Right ventricle myocardium superior (tissue), 1 donor: ENCODE measurements at regions of chr7 and their contacts with region 1.

Region 1: GRCh38 chr7:82234457-82235049 is 209.0 kb downstream of the CACNA2D1 start:
- DNase-seq: no peak
- ATAC-seq: no peak

Region 2: DNA sequence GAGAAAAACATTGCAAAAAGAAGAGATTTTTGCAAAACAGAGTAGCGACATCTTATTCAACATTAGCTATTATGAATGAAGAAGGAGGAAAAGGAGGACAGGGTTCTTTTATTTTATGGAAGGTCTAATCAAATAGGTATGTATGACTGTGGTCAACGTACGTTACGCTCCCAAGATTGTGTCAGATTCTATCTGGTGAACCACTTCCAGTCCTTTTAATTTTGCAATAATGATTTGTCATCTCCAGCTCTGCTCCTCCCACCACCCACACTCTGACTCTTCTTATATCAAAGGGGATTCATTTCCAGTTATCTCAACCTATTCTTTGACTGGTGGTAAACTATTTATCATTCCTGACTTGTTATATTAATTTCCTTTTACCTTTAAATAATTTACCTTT is 50.9 kb before region 1 on chr7:
- intact Hi-C with region 1: no loop called
- DNase-seq: no peak
- ATAC-seq: no peak

Region 3: GRCh38 chr7:82443547-82444219 is 209.1 kb after region 1 on chr7 and contains the start of gene CACNA2D1:
- intact Hi-C with region 1: loop called (anchors 5 kb)
- DNase-seq: peak; percentile 89
- ATAC-seq: peak; percentile 95
- total RNA-seq, gene CACNA2D1: 38.5 TPM

Region 4: DNA sequence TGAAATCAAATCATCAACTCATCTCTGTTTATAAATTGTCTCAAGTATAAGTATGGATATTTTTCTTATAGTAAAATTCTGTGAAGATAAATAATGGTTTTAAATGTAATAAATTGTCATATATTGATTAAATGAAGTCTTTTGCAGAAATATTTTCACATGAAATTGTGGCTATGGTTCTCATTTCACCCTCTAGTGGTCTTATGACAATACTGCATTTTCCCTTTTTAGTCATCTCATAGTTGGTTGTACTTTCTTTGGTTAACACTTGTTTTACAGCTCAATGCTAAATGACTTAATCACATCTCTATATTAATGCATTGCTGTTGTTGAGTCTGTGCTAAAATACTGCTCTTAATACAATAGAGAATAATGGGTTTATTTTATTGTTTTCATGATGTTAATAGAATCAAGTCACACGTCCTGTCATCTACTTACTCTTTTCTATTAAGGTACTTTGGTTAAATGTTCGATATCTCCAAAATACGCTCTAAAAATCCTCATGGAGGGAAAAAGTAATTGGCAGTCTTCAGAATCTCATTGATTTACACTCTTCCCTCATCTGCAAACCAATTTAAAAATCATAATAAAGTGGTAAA is 247.0 kb after region 1 on chr7:
- intact Hi-C with region 1: loop called (anchors 10 kb)
- DNase-seq: no peak
- ATAC-seq: no peak

Region 5: GRCh38 chr7:82572195-82572880 is 337.8 kb after region 1 on chr7:
- intact Hi-C with region 1: loop called (anchors 5 kb)
- DNase-seq: peak; percentile 82
- ATAC-seq: peak; percentile 97